Cardiac septum (tissue), 1 donor: ENCODE measurements at regions of chr11 and their contacts with region 1.

Region 1: GRCh38 chr11:108222686-108223448 is at the start of gene ATM:
- DNase-seq: peak; percentile 100
- total RNA-seq, gene ATM: 35.3 TPM

Region 2: DNA sequence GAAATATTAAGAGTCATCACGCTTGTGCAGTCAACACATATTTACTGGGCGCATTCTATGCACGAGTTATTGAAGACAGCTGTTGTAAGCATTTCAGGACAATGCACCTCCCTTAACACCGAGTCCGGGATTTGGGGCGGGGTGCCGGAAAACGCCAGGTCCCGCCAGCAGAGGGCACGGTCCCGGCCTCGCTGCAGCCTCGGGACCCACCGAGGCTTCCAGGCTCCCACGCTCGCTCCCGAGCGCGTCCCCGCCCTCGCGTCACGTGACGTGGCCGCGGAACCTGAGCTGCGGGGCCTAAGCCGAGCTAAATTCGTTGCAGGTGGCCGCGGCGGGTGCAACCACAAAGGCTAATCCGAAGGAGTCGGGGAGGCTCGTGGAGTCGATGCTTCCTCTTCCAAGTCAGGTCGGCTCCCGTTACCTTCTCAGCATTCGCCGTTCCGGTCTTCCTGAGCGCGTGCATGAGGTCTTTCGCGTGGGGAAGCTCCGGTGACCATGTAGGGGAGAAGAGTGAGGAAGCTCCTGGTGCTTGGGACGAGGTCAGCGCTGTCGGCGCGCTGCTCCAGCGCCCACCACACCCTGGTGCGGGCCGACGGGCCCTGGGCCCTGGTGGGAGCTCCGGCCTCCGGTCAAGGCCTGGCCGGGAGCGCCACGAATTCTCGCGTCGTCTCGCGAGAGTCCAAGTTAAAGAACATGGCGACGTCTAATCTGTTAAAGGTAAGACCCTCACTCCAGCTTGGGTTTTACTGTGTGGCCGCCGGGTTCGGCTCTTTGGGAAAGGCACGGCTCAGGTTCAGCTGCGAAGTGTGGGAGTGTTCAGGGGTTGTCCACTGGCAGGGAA is 214.0 kb before region 1 on chr11 and contains the start of gene CUL5:
- intact Hi-C with region 1: loop called (anchors 10 kb)
- DNase-seq: peak; percentile 96
- total RNA-seq, gene CUL5: 37.5 TPM

Region 3: DNA sequence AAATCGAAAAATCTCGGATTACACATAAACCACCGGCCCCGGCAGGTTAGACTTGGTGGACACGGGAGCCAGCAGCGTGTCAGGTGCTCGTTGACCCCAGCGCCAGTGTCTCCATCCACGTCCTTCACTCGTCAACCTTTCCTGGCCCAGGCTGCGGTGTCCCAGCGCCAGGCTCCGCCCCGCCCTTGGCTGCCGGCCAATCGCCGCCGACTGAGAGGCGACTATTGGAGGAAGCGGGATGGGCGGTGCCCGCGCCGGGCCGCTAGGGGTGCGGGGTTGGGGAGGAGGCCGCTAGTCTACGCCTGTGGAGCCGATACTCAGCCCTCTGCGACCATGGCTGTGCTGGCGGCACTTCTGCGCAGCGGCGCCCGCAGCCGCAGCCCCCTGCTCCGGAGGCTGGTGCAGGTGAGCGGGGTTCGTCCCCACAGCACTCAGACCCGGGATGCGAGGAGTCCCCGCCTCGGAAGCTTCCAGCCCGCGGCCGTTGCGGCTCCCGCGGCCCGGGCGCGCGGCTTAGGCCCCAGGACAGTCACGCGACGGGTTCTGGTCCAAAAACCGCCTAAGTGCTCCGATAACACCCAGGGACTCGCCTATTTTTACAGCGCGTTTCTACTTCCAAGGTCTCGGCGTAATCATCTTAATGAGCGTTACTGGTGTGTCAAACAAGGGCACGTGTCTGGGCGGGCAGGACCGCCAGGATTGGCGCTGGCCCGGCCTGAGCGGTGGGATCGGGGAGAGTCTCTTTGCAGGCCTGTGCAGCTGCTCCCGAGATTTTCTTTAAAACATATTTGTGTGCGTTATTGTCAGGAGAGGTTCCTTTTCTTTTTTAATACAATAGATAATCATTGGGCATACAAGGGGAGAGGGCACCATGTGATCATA is 101.4 kb before region 1 on chr11 and contains the start of gene ACAT1:
- intact Hi-C with region 1: loop called (anchors 5 kb)
- DNase-seq: peak; percentile 99
- total RNA-seq, gene ACAT1: 238 TPM

Region 4: DNA sequence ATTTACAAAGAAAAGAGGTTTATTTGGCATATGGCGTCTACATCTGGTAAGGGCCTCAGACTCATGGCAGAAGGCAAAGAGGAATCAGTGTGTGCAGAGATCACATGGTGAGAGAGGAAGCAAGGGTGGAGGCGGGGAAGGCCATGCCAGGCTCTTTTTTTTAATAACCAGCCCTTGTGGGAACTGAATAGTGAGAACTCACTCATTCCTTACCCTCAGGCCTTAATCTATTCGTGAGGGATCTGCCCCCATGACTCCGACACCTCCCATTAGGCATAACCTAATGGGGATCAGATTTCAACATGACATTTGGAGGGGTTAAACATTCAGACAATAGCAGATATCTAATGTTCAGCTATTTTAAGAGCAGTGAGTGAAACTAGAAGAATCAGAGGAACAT is 55.7 kb after region 1 on chr11:
- intact Hi-C with region 1: loop called (anchors 2 kb)
- DNase-seq: no peak

Region 5: GRCh38 chr11:108467091-108467823 is 244.4 kb after region 1 on chr11 and contains the start of gene C11orf65:
- intact Hi-C with region 1: loop called (anchors 2 kb)
- DNase-seq: peak; percentile 98
- total RNA-seq, gene C11orf65: 0.62 TPM

Region 6: DNA sequence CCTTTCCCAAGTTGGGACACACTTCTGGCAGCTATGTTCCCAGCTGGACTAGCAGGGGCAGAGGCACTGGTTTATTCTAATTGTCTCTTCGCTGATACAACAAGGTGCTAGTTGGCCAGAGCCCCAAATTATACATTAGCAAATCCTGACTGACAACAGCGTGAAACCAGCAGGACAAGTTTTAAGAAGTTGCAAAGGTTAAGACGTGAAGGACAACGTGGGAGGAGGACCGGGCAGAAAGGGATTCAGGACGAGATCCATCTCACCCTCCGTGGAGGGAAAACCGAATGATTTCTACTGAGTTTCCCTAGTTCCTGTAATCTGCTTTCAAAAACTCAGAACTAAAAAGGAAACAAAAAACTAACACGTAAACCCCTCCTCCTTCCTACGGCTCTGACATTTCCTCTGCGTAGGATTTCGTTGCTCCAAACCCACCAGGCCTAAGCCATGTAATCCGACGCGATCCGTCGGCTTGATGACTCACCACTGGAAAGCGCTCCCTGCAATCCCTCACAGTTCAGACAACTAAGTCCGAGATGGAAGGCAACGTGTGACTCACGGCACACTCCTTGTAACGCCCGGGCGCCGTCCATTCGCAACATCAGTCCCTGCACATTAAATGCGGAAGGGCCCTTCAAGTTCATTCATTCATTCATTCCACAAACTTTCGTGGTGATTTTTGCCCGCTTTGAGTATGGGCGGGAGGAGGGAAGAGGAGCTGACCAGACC is 274.6 kb after region 1 on chr11:
- intact Hi-C with region 1: loop called (anchors 5 kb)
- DNase-seq: peak; percentile 88

Region 7: GRCh38 chr11:108664730-108665525 is 442.1 kb after region 1 on chr11 and contains the start of gene DDX10:
- intact Hi-C with region 1: loop called (anchors 10 kb)
- DNase-seq: peak; percentile 99
- total RNA-seq, gene DDX10: 11.5 TPM